ENCODE measurements at regions of chr17 and their contacts with region 1.

Region 1: DNA sequence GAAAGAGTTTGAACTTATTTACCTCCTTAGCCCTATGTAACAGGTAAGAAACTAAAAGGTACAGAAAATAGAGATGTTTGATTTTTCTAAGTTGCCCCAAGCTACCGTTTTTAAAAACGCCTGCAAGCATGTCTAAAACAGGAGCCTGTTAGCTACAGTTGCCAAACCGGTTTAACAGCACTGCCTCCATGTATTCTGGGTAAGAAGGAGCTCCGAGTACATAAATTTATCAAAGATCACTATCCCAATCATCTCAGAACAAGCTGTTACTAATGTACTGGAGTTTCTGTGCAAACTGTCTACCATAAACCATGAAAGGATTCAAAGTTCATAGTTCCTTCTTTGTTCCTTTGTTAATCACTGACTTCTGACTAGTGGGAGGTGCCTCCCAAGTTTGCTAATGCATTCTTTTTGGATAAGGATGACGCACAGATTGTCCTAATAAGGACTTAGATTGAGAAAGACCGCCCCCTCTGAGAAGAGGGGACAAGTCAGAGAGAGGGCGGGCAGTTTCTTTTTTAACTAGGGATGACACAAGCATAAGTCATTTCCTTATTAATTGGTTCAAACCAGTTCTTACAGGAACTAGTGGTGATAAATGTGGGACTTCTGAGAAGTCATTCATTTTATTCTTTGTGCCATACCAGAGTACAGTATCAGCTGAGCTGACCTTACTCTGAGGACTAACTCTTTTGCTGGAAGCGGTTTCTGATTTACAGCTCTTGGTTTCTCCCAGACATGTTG is 55.3 kb downstream of the TUBD1 start:
- DNase-seq: peak; percentile 100
- ATAC-seq: peak; percentile 81
- H3K4me3 ChIP-seq: peak overlapping the region; percentile 74 to 78
- H3K27ac ChIP-seq: peak overlapping the region; percentile 97
- H3K4me1 ChIP-seq: peaks cover 65 to 84% of the 10 kb centered on the region in 2 experiments
- H3K27me3 ChIP-seq: no peaks in the 10 kb centered on the region
- CTCF ChIP-seq: no peak
- POLR2A ChIP-seq: peak; percentile 99
- RAD21 ChIP-seq: no peak

Region 2: DNA sequence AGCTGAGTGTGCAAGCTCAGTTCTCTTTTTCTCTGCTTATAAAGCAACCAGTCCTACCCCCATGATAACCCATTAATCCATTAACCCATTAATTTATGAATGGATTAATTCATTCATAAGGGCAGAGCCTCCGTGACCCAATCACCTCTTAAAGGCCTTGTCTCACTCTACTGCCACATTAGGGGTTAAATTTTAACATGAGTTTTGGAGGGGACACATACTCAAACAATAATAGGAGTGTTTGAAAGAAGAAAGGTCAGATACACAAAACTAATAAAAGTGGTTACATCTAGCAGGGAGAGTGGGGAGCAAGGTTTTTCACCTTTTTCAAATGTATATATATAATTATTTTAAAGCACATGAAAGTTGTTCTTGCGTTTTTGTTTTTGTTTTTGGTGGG is 123.2 kb before region 1 on chr17:
- CTCF ChIA-PET with region 1: no interaction called
- POLR2A ChIA-PET with region 1: no interaction called
- RAD21 ChIA-PET with region 1: no interaction called
- intact Hi-C with region 1: no loop called
- DNase-seq: no peak
- ATAC-seq: no peak
- H3K4me3 ChIP-seq: no peak overlapping the region
- H3K27ac ChIP-seq: no peak overlapping the region
- H3K4me1 ChIP-seq: peaks cover 1 to 10% of the 10 kb centered on the region in 2 experiments; a peak in 3 of 4 replicates
- H3K27me3 ChIP-seq: no peaks in the 10 kb centered on the region
- CTCF ChIP-seq: no peak
- POLR2A ChIP-seq: no peak
- RAD21 ChIP-seq: no peak

Region 3: DNA sequence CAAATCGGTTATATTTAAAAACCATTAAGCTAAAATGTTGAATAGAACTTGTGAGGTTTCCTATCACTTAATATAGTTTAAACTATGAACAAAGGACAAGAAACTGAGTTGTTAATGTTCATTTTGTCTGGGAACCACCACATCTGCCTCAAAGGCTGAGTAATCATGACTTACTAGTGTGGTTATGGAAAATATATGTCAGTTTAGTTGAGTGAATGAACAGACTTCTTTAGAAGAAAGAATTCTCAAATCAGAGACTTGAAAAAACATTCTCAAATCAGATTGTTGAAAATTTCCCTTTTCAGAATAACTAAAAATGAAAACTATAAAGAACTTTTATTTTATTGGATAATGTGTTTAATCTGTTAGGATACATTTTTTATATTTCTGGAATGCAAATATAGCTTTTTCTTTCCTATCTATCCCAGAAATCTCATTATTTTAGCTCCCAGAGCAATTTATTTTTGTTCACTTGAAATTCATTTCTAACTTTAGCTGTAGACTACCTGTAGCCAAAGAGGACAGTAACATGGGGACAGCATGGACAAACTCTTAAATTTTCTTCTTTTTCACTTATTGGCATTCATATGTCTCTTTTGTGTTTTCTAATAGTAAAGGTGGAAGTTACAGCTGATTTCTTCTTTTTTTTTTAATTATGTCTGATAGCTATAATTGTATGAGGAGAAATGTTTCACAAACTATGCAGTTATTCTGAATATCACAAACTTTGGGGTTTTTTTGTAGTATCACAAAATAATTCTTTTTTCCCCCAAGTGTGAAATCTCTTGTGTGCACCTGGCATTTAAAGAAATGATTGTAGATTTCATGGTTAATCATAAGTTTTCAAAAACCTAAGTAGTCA is 74.7 kb before region 1 on chr17:
- CTCF ChIA-PET with region 1: no interaction called
- POLR2A ChIA-PET with region 1: interaction called, 132 read pairs
- RAD21 ChIA-PET with region 1: interaction called in 1 of 2 experiments, 5 read pairs
- intact Hi-C with region 1: no loop called
- DNase-seq: peak; percentile 75
- ATAC-seq: no peak
- H3K4me3 ChIP-seq: peak overlapping the region in 1 of 2 experiments; percentile 2; a peak in 1 of 4 replicates
- H3K27ac ChIP-seq: peak overlapping the region; percentile 84
- H3K4me1 ChIP-seq: peaks cover 55 to 70% of the 10 kb centered on the region in 2 experiments
- H3K27me3 ChIP-seq: no peaks in the 10 kb centered on the region
- CTCF ChIP-seq: no peak
- POLR2A ChIP-seq: no peak
- RAD21 ChIP-seq: 0 out of 2 replicates have a peak, but pooled peaks have one; percentile 13

Region 4: DNA sequence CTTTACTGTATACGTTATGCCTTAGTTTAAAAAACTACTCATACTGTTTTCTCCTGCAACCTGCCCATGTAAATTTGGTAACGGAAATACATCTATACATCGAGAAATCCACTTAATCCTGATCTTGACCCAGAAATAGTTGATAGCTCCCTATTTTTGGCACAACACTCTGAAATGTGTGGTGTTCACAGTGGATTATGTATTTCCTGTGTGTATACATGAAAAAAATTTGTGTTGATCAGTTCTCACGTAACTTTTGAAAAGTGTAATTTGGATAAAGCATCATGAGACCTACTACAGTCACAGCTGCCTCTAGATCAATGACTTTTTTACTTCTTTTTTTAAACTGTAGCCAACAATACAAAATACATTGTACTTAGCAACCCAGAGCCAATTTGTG is 39.4 kb before region 1 on chr17:
- CTCF ChIA-PET with region 1: no interaction called
- POLR2A ChIA-PET with region 1: interaction called, 13 read pairs
- RAD21 ChIA-PET with region 1: no interaction called
- intact Hi-C with region 1: no loop called
- DNase-seq: no peak
- ATAC-seq: no peak
- H3K4me3 ChIP-seq: no peak overlapping the region
- H3K27ac ChIP-seq: peak overlapping the region; percentile 37; the same call in 1 of the 2 replicates
- H3K4me1 ChIP-seq: peaks cover 51 to 62% of the 10 kb centered on the region in 2 experiments
- H3K27me3 ChIP-seq: no peaks in the 10 kb centered on the region
- CTCF ChIP-seq: no peak
- POLR2A ChIP-seq: no peak
- RAD21 ChIP-seq: no peak

Region 5: DNA sequence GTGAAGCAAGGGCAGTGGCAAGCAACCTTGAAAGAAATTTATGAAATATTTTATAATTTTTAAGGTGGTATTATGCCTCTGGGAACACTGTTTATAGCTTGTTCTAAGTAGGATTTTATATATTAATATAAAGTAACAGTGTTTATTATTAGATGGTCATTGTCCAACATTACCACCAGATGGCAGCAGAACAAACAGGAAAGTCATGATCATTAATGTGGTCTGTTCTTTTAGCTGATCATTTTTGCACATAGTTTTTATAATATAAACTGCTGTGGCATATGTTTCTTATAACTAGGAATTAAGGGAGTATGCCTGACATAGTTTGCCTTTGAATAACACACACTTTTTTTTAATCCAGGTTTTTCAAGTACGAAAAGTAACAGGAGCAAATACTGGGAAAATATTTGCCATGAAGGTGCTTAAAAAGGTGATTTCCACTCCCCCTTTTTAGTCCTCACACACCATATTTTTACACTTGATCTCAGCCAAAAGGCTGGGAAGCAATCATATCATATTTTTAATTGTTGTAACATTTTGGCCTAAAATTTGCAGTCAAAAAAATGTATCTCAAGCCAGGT is 76.9 kb after region 1 on chr17:
- CTCF ChIA-PET with region 1: no interaction called
- POLR2A ChIA-PET with region 1: no interaction called
- RAD21 ChIA-PET with region 1: no interaction called
- intact Hi-C with region 1: no loop called
- DNase-seq: peak; percentile 19
- ATAC-seq: peak; percentile 72
- H3K4me3 ChIP-seq: no peak overlapping the region
- H3K27ac ChIP-seq: no peak overlapping the region
- H3K4me1 ChIP-seq: no peaks in the 10 kb centered on the region
- H3K27me3 ChIP-seq: no peaks in the 10 kb centered on the region
- CTCF ChIP-seq: peak; percentile 65 to 76 (median 71); a peak in 5 of 6 replicates
- POLR2A ChIP-seq: no peak
- RAD21 ChIP-seq: peak; percentile 74